Activated T-helper 1 cell treated with anti-CD3 and anti-CD28 coated beads, Interleukin-12 subunit alpha, Interleukin-12 subunit beta, Interleukin-2, Interleukin-4 antibody, amounts not matched to agents 30 ng/mL and 10 ng/mL and 1 ng/mL, durations not matched to agents 14 hours and 24 hours and 36 hours (primary cell): ENCODE measurements at regions of chr3 and their contacts with region 1.

Region 1: DNA sequence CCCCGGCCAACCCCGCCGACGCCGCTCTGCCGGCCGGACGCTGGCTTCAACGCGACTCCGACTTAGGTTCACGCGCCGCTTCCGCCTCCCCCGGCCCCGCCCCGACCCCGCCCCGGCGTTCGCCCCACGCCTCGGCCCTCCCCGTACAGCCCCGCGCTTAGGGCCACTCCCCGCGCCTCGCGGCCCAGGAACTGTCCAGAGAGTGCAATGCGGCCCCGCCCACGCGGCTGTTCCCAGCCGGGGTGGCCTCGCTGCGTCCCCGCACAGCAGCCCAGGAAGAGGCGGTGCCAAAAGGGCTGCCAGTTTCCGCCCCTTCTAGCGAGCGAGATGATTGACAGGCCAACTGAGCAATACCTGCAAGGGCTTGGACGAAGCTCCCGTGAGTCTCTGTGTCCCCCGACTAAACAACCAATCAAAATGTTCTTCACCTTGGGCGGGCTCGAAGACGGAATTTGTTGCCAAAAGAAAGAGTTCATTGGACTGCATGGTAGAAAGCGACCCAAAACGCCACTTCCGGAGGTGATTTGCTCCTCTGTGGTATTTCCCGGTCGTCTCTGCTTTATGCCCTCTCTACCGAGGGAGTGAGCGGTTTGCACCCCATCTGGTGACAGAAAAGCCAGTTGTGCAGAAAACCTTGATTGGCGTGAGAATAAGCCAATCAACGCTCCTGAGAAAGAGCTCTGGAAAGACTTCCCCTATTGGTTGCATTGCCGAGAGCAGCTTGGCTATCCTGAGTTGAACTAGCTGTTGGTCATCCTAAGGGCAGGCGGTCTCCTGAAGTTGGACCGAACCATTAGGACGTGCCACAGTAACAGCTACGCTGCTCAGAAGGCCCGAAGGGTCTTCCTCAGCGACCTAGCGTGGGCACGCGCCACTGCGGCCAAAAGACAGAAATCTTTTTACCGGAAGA is at the start of gene UBP1:
- DNase-seq: peak; percentile 99
- H3K4me3 Mint-ChIP-seq: peak within 1 kb of the TSS; percentile 100
- H3K27ac Mint-ChIP-seq: peak within 1 kb of the TSS; percentile 100
- H3K4me1 Mint-ChIP-seq: peaks cover 54% of the 10 kb centered on the region
- H3K27me3 Mint-ChIP-seq: no peaks in the 10 kb centered on the region
- total RNA-seq, gene UBP1: 69.4 and 71.6 TPM in 2 replicates

Region 2: GRCh38 chr3:32106280-32106928 is 1334.2 kb before region 1 on chr3 and contains the start of gene GPD1L:
- intact Hi-C with region 1: loop called (anchors 5 kb)
- DNase-seq: peak; percentile 93
- H3K4me3 Mint-ChIP-seq: peak within 1 kb of the TSS; percentile 97
- H3K27ac Mint-ChIP-seq: peak within 1 kb of the TSS; percentile 89
- H3K4me1 Mint-ChIP-seq: peaks cover 28% of the 10 kb centered on the region
- H3K27me3 Mint-ChIP-seq: no peaks in the 10 kb centered on the region
- total RNA-seq, gene GPD1L: 16.3 and 16.6 TPM in 2 replicates

Region 3: DNA sequence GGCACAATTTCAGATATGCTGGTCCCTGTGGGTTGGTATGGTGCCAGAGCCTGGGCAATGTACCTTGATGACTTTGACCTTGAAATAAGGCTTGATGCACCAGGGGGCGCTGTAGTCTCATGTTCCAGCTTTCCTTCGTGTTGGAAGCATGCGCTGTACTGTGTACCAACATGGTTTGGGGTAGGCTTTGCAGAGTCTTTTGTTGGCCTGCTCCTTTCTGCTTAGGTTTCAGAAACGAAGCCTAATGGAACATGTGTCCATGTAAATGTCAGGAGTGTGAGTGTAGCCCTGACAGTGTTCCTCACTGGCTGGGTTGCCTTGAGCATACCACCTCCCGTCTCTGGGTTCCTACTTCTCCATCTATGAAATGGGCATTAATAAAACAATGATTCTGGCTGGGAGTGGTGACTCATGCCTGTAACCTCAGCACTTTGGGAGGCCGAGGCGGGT is 492.8 kb before region 1 on chr3:
- intact Hi-C with region 1: loop called (anchors 5 kb)
- DNase-seq: peak; percentile 83
- H3K4me3 Mint-ChIP-seq: no peak overlapping the region
- H3K27ac Mint-ChIP-seq: peak overlapping the region; percentile 44
- H3K4me1 Mint-ChIP-seq: peaks cover 48% of the 10 kb centered on the region
- H3K27me3 Mint-ChIP-seq: peaks cover 2% of the 10 kb centered on the region

Region 4: DNA sequence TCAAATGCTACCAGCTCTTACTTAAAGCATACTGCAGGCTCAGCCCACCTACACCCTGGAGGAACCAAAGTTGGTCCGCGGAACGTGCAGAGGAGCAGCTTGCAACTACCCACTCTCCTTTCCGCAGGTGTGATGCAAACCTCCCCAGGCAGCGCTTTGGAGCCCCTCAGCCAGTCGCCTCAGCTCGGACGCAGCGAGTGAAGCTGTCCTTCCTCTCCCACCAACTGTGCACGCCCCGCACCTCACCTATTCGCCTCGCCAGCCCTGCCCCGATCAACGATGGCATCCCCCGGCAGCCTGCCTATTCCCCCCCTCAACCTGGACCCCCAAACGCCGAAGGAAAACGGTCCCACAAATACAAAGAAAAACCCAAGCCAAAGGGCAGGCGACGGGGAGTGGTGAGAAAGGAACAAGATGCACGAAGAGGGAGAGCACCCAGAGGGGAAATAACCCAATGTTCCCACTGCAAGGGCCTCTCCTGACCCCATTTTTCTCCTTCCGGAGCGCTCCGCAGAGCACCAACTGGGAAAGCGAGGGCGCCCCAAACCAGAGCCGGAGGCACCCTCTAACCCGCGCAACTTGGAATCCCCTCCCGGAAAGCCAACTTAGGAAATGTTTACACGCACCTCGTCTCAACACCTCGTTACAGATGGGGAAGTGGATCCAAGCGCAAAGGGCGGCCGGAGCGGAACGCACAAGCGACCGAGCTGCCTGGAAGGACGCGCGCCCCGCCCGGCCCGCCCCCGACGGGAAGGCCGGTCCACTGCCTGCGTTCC is 344.3 kb before region 1 on chr3:
- intact Hi-C with region 1: loop called (anchors 1 kb)
- DNase-seq: peak; percentile 39
- H3K4me3 Mint-ChIP-seq: peak overlapping the region; percentile 97
- H3K27ac Mint-ChIP-seq: peak overlapping the region; percentile 86
- H3K4me1 Mint-ChIP-seq: peaks cover 43% of the 10 kb centered on the region
- H3K27me3 Mint-ChIP-seq: peaks cover 2% of the 10 kb centered on the region

Region 5: GRCh38 chr3:33287672-33288282 is 152.8 kb before region 1 on chr3:
- intact Hi-C with region 1: no loop called
- DNase-seq: no peak
- H3K4me3 Mint-ChIP-seq: no peak overlapping the region
- H3K27ac Mint-ChIP-seq: no peak overlapping the region
- H3K4me1 Mint-ChIP-seq: no peaks in the 10 kb centered on the region
- H3K27me3 Mint-ChIP-seq: peaks cover 9% of the 10 kb centered on the region

Region 6: DNA sequence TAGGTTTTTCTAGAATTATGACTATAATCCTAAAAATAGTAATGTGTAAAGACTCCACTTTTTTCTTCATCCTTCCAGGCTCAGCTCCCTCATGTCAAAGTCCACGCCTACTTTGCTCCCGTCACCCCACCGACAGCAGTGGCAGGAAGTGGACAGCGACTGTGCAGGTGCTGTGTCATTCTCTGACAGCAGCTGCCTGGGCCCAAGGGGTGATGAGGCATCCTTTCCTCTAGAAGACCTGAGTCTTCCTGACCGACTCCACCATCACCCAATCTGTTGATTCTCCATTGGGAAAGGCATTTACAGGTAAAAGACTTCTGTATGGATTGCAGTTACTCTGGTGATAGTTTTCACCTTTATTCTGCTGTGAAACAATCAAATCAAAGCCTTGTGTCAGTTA is 55.2 kb before region 1 on chr3:
- intact Hi-C with region 1: loop called (anchors 2 kb)
- DNase-seq: peak; percentile 39
- H3K4me3 Mint-ChIP-seq: no peak overlapping the region
- H3K27ac Mint-ChIP-seq: peak overlapping the region; percentile 56
- H3K4me1 Mint-ChIP-seq: peaks cover 25% of the 10 kb centered on the region
- H3K27me3 Mint-ChIP-seq: no peaks in the 10 kb centered on the region

Region 7: DNA sequence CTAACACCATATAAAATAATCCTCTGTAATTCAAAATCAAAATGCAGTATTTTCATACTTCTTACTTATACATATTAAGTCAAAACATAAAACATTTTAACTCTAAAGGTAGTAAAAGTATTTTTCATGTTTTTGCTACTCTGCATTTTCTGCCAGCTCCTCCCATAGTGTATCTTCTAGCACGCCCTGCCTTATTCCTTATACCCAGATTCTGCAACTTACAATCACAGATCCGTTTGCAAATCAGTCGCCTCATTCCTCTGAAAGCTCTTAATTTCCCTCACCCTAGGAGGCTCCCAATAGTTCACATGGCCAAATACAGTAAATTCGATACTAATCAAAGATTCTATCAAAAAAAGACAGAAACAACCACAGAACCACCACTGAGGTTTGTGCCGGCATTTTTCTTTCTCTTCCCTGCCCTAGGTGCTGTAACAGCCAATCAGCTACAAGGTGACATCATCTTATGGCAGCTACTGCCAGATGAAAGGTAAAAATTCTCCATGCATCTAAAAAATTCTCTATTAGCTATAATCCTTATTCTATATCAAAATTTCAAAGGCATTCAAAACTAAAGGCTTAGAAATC is 204.6 kb after region 1 on chr3:
- intact Hi-C with region 1: loop called (anchors 5 kb)
- DNase-seq: peak; percentile 5
- H3K4me3 Mint-ChIP-seq: peak overlapping the region; percentile 68
- H3K27ac Mint-ChIP-seq: no peak overlapping the region
- H3K4me1 Mint-ChIP-seq: peaks cover 6% of the 10 kb centered on the region
- H3K27me3 Mint-ChIP-seq: no peaks in the 10 kb centered on the region

Region 8: DNA sequence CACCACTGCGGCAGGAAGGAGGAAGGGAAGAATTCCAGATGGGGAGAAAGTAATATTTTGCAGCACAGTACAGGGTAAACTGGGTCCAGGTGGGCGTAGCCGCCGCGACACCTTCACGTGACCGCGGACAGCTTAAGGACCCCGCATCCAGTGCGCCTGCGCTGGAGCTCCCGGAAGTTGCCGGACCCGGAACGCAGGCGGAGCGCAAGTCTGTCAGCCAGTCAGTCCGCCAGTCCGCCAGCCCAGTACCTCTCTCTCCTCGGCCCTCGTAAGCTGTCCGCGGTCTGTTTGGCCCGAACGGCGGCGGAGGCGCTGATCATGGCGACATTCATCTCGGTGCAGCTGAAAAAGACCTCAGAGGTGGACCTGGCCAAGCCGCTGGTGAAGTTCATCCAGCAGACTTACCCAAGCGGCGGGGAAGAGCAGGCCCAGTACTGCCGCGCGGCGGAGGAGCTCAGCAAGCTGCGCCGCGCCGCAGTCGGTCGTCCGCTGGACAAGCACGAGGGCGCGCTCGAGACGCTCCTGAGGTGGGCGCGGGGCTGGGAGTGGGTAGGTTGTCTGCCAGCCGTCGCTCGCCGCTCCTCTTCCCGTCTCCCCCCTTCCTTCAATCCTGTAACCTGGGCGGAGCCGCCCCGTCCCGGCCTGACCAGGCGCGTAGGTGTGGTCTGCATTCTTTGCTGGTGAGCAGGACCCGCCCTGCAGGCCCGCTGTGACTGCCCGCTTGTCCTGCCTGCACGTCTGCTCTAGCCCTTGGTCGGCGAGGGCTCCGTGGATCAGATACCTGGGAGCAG is 358.0 kb after region 1 on chr3 and contains the start of gene PDCD6IP:
- intact Hi-C with region 1: loop called (anchors 1 kb)
- DNase-seq: peak; percentile 87
- H3K4me3 Mint-ChIP-seq: peak within 1 kb of the TSS; percentile 95
- H3K27ac Mint-ChIP-seq: peak within 1 kb of the TSS; percentile 95
- H3K4me1 Mint-ChIP-seq: peaks cover 48% of the 10 kb centered on the region
- H3K27me3 Mint-ChIP-seq: no peaks in the 10 kb centered on the region
- total RNA-seq, gene PDCD6IP: 171 and 179 TPM in 2 replicates